Natural killer cell (primary cell): ENCODE measurements at regions of chr17 and their contacts with region 1.

Region 1: DNA sequence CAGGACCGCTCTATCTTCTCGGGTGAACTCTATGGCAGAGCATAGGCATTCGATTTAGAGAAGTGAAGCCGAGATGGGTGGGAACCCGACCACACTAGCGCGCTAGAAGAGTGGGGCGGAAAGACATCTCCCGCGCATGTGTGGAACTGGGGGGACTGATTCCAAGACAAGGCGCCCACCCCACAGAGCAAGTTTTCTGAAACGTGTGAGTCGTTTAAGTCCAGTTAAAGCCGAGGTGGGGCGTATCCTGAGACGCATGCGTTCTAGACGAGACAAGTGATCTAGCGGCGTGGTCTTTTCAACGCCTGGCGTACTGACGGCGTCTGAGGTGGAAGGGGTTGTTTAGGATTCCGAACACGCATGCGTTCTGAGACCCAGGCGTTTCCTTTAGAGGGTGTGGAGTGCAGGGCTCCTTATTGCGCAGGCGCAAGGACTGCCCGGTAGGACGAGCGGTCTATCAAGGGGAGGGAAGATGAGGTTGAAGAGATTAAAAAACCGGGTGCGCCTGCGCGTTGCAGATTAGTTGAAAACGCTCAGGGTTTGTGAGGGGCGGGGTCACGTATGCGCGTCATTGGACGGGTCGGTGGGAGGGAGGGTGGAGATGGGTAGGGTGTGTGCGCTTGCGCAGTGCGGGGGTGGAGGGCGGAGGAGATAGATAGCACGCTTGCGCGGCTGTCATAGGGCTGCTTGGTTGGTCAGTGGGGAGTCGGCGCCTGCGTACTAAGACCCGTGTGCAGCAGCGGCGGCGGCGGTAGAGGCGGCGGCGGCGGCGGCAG is at the start of gene EIF5A:
- DNase-seq: peak; percentile 98 to 100
- ATAC-seq: peak; percentile 67 to 86 (median 73)
- H3K4me3 ChIP-seq: peak within 1 kb of the TSS; percentile 88
- H3K4me3 Mint-ChIP-seq: peak within 1 kb of the TSS; percentile 95
- H3K27ac ChIP-seq: peak within 1 kb of the TSS; percentile 99
- H3K27ac Mint-ChIP-seq: peak within 1 kb of the TSS; percentile 91 to 99
- H3K4me1 ChIP-seq: peaks cover 39% of the 10 kb centered on the region
- H3K4me1 Mint-ChIP-seq: peaks cover 40 to 48% of the 10 kb centered on the region in 2 donors
- H3K27me3 ChIP-seq: no peaks in the 10 kb centered on the region
- H3K27me3 Mint-ChIP-seq: no peaks in the 10 kb centered on the region
- CTCF ChIP-seq: no peak
- total RNA-seq, gene EIF5A: 483 to 608 (median 492) TPM

Region 2: GRCh38 chr17:7204828-7205461 is 102.2 kb before region 1 on chr17:
- intact Hi-C with region 1: loop called (anchors 1 kb)
- DNase-seq: peak; percentile 93 to 99
- ATAC-seq: peak; percentile 79 to 91 (median 80)
- H3K4me3 ChIP-seq: peak overlapping the region; percentile 57
- H3K4me3 Mint-ChIP-seq: peak overlapping the region; percentile 93
- H3K27ac ChIP-seq: peak overlapping the region; percentile 96
- H3K27ac Mint-ChIP-seq: peak overlapping the region; percentile 93 to 95
- H3K4me1 ChIP-seq: peaks cover 24% of the 10 kb centered on the region
- H3K4me1 Mint-ChIP-seq: peaks cover 27 to 34% of the 10 kb centered on the region in 2 donors
- H3K27me3 ChIP-seq: no peaks in the 10 kb centered on the region
- H3K27me3 Mint-ChIP-seq: no peaks in the 10 kb centered on the region
- CTCF ChIP-seq: no peak

Region 3: DNA sequence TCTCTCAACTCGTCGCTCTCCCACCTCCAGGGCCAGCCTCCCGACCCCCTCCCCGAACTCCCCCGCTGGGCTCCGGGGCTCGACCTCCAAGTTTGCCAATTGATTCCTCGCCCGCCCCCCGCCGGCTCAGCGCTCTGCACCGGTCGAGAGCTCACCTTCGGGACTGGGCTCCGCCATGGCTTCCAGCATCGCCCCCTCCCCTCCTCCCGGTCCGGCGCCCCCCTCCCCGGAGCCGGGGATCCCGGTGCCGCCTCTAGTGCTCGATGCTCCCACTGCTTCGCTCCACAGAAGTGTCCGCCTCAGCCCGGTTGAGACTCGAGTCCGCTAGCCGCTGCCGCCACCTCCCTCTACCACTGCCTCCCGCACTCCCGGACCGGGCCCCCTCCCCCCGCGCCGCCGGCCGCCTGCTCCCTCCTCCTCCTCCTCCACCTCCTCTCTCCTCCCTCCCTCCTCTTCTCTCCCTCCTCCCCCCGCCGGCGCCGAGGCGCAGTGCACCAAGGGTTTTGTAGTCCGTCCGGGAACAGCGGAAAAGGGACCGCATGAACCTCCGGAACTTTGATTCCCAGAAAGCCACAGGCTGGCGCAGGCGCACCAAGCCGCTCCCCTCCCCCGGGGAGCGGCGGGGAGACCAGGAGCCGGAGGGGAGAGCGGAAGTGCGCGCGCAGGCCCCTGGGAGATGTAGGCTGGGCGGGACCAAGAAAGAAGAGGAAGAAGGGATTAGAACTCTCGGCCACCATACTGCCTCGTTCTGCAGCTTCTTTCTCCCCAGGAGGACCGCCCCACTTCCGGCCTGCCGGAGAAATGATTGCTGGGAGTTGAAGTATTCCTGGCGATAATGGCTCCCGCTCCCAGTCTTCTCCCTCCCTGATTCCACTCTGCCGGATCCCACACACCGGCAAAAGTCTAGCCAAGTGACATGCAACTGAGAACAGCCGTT is 67.7 kb before region 1 on chr17 and contains the start of gene PHF23:
- intact Hi-C with region 1: loop called (anchors 2 kb)
- DNase-seq: peak; percentile 85 to 99
- ATAC-seq: peak; percentile 56 to 77 (median 68)
- H3K4me3 ChIP-seq: peak within 1 kb of the TSS; percentile 87
- H3K4me3 Mint-ChIP-seq: peak within 1 kb of the TSS; percentile 96
- H3K27ac ChIP-seq: peak within 1 kb of the TSS; percentile 80
- H3K27ac Mint-ChIP-seq: peak within 1 kb of the TSS; percentile 97 to 99
- H3K4me1 ChIP-seq: peaks cover 53% of the 10 kb centered on the region
- H3K4me1 Mint-ChIP-seq: peaks cover 61 to 77% of the 10 kb centered on the region in 2 donors
- H3K27me3 ChIP-seq: no peaks in the 10 kb centered on the region
- H3K27me3 Mint-ChIP-seq: no peaks in the 10 kb centered on the region
- CTCF ChIP-seq: no peak
- total RNA-seq, gene PHF23: 19.3 to 32.3 (median 20.8) TPM

Region 4: GRCh38 chr17:7252176-7253043 is 54.7 kb before region 1 on chr17 and contains the start of gene ELP5:
- intact Hi-C with region 1: loop called (anchors 1 kb)
- DNase-seq: peak; percentile 89 to 93
- ATAC-seq: peak; percentile 62 to 80 (median 64)
- H3K4me3 ChIP-seq: peak within 1 kb of the TSS; percentile 67
- H3K4me3 Mint-ChIP-seq: peak within 1 kb of the TSS; percentile 92
- H3K27ac ChIP-seq: peak within 1 kb of the TSS; percentile 96
- H3K27ac Mint-ChIP-seq: peak within 1 kb of the TSS; percentile 93 to 98
- H3K4me1 ChIP-seq: peaks cover 32% of the 10 kb centered on the region
- H3K4me1 Mint-ChIP-seq: peaks cover 41 to 43% of the 10 kb centered on the region in 2 donors
- H3K27me3 ChIP-seq: no peaks in the 10 kb centered on the region
- H3K27me3 Mint-ChIP-seq: no peaks in the 10 kb centered on the region
- CTCF ChIP-seq: no peak
- total RNA-seq, gene ELP5: 30.1 to 38.5 (median 30.3) TPM

Region 5: DNA sequence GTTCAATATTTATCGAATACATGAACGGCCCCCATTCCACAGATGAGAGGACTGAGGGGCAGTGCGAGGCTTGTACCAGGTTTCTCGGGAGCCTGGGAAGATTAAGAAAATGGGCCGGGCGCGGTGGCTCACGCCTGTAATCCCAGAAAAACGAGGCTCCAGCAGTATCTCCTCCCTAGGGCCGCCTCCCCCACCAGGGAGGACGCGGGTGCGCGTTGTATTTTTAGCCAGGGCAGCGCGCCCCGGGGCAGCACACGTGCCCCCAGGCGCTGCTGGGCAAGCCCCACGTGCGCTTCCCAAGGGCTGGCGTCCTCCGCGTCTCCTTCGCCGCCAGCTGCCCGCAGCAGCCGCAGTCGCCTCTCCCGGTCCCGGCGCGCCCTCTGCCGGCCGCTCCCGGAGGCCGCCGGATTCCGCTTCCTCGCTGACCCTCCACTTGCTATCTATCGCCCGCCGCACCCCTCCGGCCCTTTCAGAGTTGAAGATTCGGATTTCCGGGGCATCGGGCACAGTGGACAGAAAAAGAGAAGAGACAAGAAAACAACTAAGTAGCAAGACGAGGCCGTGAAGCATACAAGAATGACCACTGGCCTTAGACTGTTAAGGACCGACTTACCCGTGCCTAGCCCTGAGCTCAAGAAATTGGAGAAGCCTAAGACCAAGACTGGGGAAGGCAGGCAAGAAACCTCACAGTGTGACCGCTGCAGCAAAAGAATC is 10.8 kb before region 1 on chr17:
- intact Hi-C with region 1: no loop called
- DNase-seq: peak; percentile 71 to 83
- ATAC-seq: peak; percentile 46 to 63 (median 49)
- H3K4me3 ChIP-seq: no peak overlapping the region
- H3K4me3 Mint-ChIP-seq: peak overlapping the region; percentile 95
- H3K27ac ChIP-seq: no peak overlapping the region
- H3K27ac Mint-ChIP-seq: no peak overlapping the region
- H3K4me1 ChIP-seq: peaks cover 28% of the 10 kb centered on the region
- H3K4me1 Mint-ChIP-seq: peaks cover 19 to 24% of the 10 kb centered on the region in 2 donors
- H3K27me3 ChIP-seq: peaks cover 18% of the 10 kb centered on the region
- H3K27me3 Mint-ChIP-seq: peaks cover 7 to 17% of the 10 kb centered on the region in 2 donors
- CTCF ChIP-seq: peak; percentile 92

Region 6: GRCh38 chr17:7329374-7329996 is 22.4 kb after region 1 on chr17:
- intact Hi-C with region 1: loop called (anchors 1 kb)
- DNase-seq: peak; percentile 91 to 99
- ATAC-seq: peak; percentile 73 to 90 (median 76)
- H3K4me3 ChIP-seq: peak overlapping the region; percentile 90
- H3K4me3 Mint-ChIP-seq: peak overlapping the region; percentile 96
- H3K27ac ChIP-seq: peak overlapping the region; percentile 91
- H3K27ac Mint-ChIP-seq: peak overlapping the region; percentile 89 to 97
- H3K4me1 ChIP-seq: peaks cover 30% of the 10 kb centered on the region
- H3K4me1 Mint-ChIP-seq: peaks cover 21 to 40% of the 10 kb centered on the region in 2 donors
- H3K27me3 ChIP-seq: no peaks in the 10 kb centered on the region
- H3K27me3 Mint-ChIP-seq: no peaks in the 10 kb centered on the region
- CTCF ChIP-seq: no peak

Region 7: DNA sequence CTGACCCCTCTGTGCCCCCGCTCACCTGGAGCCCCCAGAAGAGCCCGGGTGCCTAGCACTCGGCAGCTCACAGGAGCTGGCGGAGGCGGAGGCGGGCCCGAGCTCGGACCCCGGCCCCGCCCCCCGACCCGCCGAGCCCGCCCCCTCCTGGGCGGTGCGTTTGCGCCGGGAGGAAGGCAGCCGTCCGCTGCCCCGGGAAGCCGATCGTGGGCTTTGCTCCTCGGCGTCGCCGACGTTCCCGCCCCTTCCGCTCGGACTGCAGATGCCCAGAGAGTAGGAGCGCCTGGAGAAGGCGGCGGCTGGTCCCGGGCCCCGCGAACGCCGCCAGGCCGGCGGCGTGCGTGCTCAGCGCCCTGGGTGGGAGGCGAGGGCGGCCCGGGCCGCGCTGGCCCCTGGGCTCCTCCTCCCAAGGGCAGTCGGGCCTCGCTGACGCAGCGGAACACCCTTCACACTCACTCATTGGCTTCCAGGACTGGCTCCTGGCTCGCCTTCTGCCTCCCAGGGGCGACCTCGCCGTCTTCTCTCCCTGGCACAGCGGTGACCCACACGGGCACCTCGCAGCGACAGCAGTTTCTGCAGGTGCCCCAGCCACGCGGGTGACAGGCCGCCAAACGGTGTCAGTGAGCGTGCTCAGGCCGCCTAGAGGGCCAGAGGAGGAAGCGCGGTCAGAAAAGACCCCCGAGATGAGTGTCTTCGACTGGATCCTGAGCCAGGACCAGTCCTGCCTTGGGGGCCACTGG is 87.5 kb after region 1 on chr17 and contains the start of gene PLSCR3:
- intact Hi-C with region 1: no loop called
- DNase-seq: peak; percentile 86 to 88
- ATAC-seq: peak; percentile 88 to 96 (median 89)
- H3K4me3 ChIP-seq: peak within 1 kb of the TSS; percentile 93
- H3K4me3 Mint-ChIP-seq: peak within 1 kb of the TSS; percentile 96
- H3K27ac ChIP-seq: peak within 1 kb of the TSS; percentile 76
- H3K27ac Mint-ChIP-seq: peak within 1 kb of the TSS; percentile 91
- H3K4me1 ChIP-seq: peaks cover 20% of the 10 kb centered on the region
- H3K4me1 Mint-ChIP-seq: peaks cover 9 to 20% of the 10 kb centered on the region in 2 donors
- H3K27me3 ChIP-seq: no peaks in the 10 kb centered on the region
- H3K27me3 Mint-ChIP-seq: no peaks in the 10 kb centered on the region
- CTCF ChIP-seq: no peak
- total RNA-seq, gene PLSCR3: 38.2 to 57.8 (median 47.0) TPM

Region 8: DNA sequence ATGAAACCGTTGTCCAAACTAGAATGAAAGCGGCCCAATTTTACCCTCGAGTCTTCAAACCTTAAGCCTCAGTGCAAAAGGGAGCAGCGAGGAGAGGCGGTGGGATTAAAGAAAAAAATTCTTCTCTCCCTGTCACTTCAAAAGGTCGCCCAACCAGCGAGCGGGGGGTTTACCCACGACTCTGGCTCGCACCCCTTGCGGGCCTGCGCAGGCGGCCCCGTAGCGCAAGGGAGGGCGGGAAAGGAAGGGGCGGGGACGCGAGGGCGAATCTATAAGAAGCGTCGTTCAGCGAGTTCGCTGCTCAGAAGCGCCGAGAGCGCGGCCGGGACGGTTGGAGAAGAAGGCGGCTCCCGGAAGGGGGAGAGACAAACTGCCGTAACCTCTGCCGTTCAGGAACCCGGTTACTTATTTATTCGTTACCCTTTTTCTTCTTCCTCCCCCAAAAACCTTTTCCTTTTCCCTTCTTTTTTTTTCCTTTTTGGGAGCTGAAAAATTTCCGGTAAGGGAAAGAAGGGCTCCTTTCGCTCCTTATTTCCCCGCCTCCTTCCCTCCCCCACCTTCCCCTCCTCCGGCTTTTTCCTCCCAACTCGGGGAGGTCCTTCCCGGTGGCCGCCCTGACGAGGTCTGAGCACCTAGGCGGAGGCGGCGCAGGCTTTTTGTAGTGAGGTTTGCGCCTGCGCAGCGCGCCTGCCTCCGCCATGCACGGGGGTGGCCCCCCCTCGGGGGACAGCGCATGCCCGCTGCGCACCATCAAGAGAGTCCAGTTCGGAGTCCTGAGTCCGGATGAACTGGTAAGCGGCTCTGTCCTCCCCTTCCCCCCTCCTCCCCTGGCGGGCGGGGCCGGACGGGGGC is 177.2 kb after region 1 on chr17 and contains the start of gene POLR2A:
- intact Hi-C with region 1: loop called (anchors 2 kb)
- DNase-seq: peak; percentile 99
- ATAC-seq: peak; percentile 63 to 83 (median 66)
- H3K4me3 ChIP-seq: peak within 1 kb of the TSS; percentile 81
- H3K4me3 Mint-ChIP-seq: peak within 1 kb of the TSS; percentile 100
- H3K27ac ChIP-seq: peak within 1 kb of the TSS; percentile 96
- H3K27ac Mint-ChIP-seq: peak within 1 kb of the TSS; percentile 100
- H3K4me1 ChIP-seq: peaks cover 50% of the 10 kb centered on the region
- H3K4me1 Mint-ChIP-seq: peaks cover 72 to 84% of the 10 kb centered on the region in 2 donors
- H3K27me3 ChIP-seq: no peaks in the 10 kb centered on the region
- H3K27me3 Mint-ChIP-seq: no peaks in the 10 kb centered on the region
- CTCF ChIP-seq: no peak
- total RNA-seq, gene POLR2A: 515 to 879 (median 524) TPM

Region 9: GRCh38 chr17:7538891-7539290 is 231.8 kb after region 1 on chr17:
- intact Hi-C with region 1: no loop called
- DNase-seq: no peak
- ATAC-seq: no peak
- H3K4me3 ChIP-seq: no peak overlapping the region
- H3K4me3 Mint-ChIP-seq: no peak overlapping the region
- H3K27ac ChIP-seq: no peak overlapping the region
- H3K27ac Mint-ChIP-seq: no peak overlapping the region
- H3K4me1 ChIP-seq: no peaks in the 10 kb centered on the region
- H3K4me1 Mint-ChIP-seq: no peaks in the 10 kb centered on the region
- H3K27me3 ChIP-seq: no peaks in the 10 kb centered on the region
- H3K27me3 Mint-ChIP-seq: no peaks in the 10 kb centered on the region
- CTCF ChIP-seq: no peak

Region 10: DNA sequence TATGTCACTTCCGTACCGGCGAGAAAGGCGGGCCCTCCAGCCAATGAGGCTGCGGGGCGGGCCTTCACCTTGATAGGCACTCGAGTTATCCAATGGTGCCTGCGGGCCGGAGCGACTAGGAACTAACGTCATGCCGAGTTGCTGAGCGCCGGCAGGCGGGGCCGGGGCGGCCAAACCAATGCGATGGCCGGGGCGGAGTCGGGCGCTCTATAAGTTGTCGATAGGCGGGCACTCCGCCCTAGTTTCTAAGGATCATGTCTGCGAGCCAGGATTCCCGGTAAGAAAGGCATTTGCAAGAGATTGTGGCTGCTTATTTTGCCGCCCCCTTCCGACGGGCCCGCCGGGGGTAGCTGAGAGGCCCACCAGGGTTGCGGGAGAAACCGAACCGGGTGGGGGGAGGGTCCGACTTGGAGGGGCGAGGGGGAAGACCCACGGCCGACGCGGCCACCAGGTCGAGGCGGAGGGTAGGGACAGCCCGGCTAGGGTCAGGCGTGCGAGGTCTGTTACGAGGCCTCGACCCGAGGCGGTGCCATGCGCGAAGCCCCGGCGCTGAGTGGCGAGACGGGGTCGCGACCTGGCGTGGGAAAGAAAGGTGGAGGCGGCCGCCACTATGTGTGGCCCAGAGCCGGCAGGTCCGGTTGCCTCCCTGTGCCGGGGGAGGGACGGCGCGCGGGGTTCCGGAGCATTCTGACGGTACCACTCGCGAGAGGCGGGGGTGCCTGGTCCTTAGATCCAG is 265.7 kb after region 1 on chr17:
- intact Hi-C with region 1: loop called (anchors 2 kb)
- DNase-seq: peak; percentile 99 to 100
- ATAC-seq: peak; percentile 79 to 93 (median 80)
- H3K4me3 ChIP-seq: peak overlapping the region; percentile 93
- H3K4me3 Mint-ChIP-seq: peak overlapping the region; percentile 99
- H3K27ac ChIP-seq: peak overlapping the region; percentile 96
- H3K27ac Mint-ChIP-seq: peak overlapping the region; percentile 98 to 100
- H3K4me1 ChIP-seq: peaks cover 30% of the 10 kb centered on the region
- H3K4me1 Mint-ChIP-seq: peaks cover 43 to 47% of the 10 kb centered on the region in 2 donors
- H3K27me3 ChIP-seq: no peaks in the 10 kb centered on the region
- H3K27me3 Mint-ChIP-seq: no peaks in the 10 kb centered on the region
- CTCF ChIP-seq: no peak